AG04450 (cell line): ENCODE measurements at regions of chr16 and their contacts with region 1.

Region 1: DNA sequence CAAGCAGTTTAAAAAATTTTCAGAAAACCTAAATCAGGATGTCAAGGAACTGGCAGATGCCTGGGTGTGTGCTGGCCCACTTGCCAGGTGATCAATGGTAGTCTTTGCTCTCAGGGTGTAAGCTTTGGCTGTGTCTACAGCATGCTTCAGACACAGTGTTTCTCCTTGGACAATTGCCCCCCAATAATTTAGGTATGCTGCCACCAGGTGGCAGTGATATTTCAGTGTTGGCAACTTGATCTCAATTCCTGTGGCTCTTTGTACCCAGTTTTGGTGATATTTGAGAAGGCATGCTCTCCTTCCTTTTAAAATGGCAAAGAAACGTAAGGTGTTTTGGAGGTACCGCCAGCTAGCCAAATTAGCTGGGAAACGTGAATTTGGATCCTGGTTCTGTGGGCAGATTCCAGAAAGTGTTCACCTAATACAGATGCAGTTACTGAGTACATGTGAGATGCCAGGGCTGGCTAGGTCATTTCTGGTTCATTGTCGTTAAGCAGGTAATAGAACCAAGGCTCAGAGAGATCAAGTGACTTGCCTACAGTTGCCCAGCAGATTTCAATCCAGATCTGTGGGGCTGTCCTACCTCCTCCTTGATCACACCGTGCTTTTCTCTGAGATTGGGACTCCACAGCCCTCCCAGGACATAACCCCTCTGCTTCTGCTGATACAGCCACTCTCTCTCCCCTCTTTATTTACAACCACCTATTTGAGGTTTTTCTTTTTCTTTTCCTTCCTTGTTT is 155.6 kb upstream of the PLCG2 start:
- DNase-seq: no peak
- H3K4me3 ChIP-seq: no peak overlapping the region
- H3K27ac ChIP-seq: no peak overlapping the region
- H3K27me3 ChIP-seq: no peaks in the 10 kb centered on the region
- CTCF ChIP-seq: peak; percentile 64

Region 2: DNA sequence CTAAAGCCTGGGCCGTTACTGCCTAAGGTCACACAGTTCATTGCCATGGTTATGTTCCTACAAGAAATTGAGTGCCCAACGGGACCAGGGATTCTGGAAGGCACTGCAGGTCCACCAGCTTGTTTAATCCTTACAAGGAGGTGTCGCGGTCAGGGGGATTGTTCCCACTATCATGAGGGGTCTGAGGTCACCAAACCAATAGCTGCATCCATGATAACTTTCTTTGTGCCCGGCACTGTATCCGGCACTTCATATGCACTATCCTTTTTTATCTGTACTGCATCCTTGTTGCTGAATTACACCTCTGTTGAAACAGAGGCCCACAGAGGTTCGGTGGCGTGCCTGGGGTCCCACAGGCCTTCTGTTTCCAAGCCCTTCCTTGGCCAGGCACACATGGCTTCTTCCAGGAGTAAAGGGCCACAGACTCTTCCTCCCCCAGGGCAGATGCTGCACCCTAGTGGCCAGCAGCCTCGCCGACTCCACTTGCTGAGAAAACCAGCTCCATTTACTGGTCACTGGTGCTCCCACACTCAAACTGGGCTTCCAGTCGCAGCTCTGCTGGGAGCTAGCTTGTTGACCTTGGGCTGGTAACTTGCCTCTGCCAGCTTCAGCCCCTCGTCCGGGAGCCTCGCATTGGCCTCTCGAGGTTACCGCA is 73.6 kb after region 1 on chr16:
- CTCF ChIA-PET with region 1: interaction called, 20 read pairs
- POLR2A ChIA-PET with region 1: no interaction called
- DNase-seq: no peak
- H3K4me3 ChIP-seq: no peak overlapping the region
- H3K27ac ChIP-seq: no peak overlapping the region
- H3K27me3 ChIP-seq: peaks cover 3% of the 10 kb centered on the region
- CTCF ChIP-seq: peak; percentile 73

Region 3: GRCh38 chr16:81723098-81723723 is 99.7 kb after region 1 on chr16:
- CTCF ChIA-PET with region 1: interaction called, 20 read pairs
- POLR2A ChIA-PET with region 1: interaction called, 3 read pairs
- DNase-seq: no peak
- H3K4me3 ChIP-seq: no peak overlapping the region
- H3K27ac ChIP-seq: no peak overlapping the region
- H3K27me3 ChIP-seq: peaks cover 18% of the 10 kb centered on the region
- CTCF ChIP-seq: peak; percentile 71